ENCODE measurements at regions of chr11 and their contacts with region 1.

Region 1: GRCh38 chr11:39990421-39990831 is 1469.0 kb downstream of the LRRC4C start:
- DNase-seq: peak; percentile 56 to 64
- H3K4me3 ChIP-seq: no peak overlapping the region
- H3K4me3 Mint-ChIP-seq: peak overlapping the region; percentile 64
- H3K27ac Mint-ChIP-seq: peak overlapping the region; percentile 87
- H3K4me1 ChIP-seq: peaks cover 30% of the 10 kb centered on the region
- H3K4me1 Mint-ChIP-seq: peaks cover 22% of the 10 kb centered on the region
- H3K27me3 ChIP-seq: no peaks in the 10 kb centered on the region
- H3K27me3 Mint-ChIP-seq: no peaks in the 10 kb centered on the region
- CTCF ChIP-seq: no peak

Region 2: DNA sequence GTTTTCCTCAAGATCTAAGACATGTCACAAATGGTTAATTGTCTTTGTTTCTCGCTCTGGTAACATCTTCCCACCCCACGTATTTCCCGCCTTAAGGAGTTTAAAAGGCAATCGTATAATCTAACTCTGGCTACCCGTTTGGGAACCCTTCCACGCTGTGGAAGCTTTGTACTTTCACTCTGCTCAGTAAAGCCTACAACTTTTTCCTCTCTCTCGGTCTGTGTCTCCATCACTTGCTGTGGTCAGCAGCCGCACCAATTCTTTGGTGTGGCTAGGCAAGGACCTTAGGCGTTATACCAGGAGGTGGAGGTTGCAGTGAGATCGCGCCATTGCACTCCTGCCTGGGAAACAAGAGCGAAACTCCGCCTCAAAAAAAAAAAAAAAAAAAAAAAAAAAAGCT is 39.0 kb after region 1 on chr11:
- CTCF ChIA-PET with region 1: no interaction called
- POLR2A ChIA-PET with region 1: interaction called, 3 read pairs
- intact Hi-C with region 1: loop called (anchors 1 kb)
- DNase-seq: peak; percentile 74 to 83
- H3K4me3 ChIP-seq: peak overlapping the region; percentile 35
- H3K4me3 Mint-ChIP-seq: peak overlapping the region; percentile 79
- H3K27ac Mint-ChIP-seq: peak overlapping the region; percentile 87
- H3K4me1 ChIP-seq: peaks cover 31% of the 10 kb centered on the region
- H3K4me1 Mint-ChIP-seq: peaks cover 22% of the 10 kb centered on the region
- H3K27me3 ChIP-seq: no peaks in the 10 kb centered on the region
- H3K27me3 Mint-ChIP-seq: no peaks in the 10 kb centered on the region
- CTCF ChIP-seq: no peak

Region 3: GRCh38 chr11:40037005-40037404 is 46.6 kb after region 1 on chr11:
- CTCF ChIA-PET with region 1: no interaction called
- POLR2A ChIA-PET with region 1: no interaction called
- intact Hi-C with region 1: loop called (anchors 2 kb)
- DNase-seq: peak; percentile 51 to 57
- H3K4me3 ChIP-seq: no peak overlapping the region
- H3K4me3 Mint-ChIP-seq: no peak overlapping the region
- H3K27ac Mint-ChIP-seq: peak overlapping the region; percentile 83
- H3K4me1 ChIP-seq: peaks cover 15% of the 10 kb centered on the region
- H3K4me1 Mint-ChIP-seq: peaks cover 8% of the 10 kb centered on the region
- H3K27me3 ChIP-seq: no peaks in the 10 kb centered on the region
- H3K27me3 Mint-ChIP-seq: no peaks in the 10 kb centered on the region
- CTCF ChIP-seq: no peak

Measured in Caco-2 (cell line).